HEK293T (cell line): ENCODE measurements at regions of chr6 and their contacts with region 1.

Region 1: DNA sequence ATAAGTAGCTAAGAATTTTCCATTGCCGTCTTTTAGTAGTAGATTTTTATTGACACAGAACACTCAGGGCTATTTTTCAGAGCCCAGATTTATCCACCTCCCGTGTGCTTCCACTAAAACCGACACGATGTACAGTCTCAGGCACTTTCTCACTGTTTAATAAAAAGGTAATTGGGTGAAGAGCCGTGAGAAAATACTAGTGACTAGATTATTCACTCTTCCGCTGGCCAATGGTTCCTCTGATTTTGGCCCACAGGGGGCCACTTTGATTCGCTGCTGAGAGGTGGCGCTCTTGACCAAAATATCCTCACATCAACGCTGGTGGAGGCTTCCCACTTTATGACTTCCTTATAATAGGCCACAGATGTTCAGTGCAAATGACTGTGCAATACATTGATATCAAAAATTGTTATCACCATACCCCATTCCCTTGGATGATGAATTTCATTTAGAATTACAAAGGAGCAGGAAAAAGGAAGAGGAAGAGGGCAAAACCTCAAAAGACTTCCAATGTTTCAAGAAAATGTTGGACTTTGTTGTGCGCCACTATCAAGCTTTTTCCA is 12.3 kb upstream of the HDDC2 start:
- DNase-seq: peak; percentile 75

Region 2: DNA sequence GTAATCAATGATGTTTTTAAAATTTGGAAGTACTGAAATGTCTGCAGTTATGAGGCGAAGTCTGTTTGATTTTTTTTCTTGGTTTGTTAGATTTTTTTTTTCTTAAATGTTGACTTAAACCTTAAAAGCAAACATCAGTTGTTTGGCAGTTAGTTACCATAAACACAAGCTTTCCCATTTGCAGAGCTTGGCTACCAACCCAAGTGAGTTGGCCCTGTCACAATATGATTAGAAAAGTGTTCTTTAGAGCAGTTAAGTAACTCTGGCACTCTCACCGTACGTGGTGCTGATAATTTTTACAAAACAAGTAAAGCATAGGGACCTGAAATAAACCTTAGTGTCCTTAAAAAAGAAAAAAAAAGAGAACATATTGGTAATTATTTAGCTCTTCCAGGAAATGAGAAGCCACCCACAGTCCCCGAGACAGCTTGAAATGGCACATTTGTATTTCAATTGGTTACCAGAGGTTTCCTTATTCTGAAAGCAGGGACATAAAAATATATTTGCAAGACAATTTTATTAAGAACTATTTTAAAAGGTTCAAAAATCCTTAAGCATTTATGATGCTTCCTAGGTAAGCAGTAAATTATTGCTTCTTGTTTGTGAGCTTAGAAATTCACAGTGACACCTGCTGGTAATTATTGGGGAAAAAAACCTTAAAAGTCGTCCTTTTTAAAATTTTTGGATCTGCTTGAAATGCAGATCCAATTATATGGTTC is 439.3 kb after region 1 on chr6:
- CTCF ChIA-PET with region 1: interaction called, 11 read pairs
- POLR2A ChIA-PET with region 1: no interaction called
- DNase-seq: no peak

Region 3: GRCh38 chr6:125765944-125766343 is 451.8 kb after region 1 on chr6:
- CTCF ChIA-PET with region 1: interaction called, 10 read pairs
- POLR2A ChIA-PET with region 1: no interaction called
- DNase-seq: no peak